IMR-90 (cell line): ENCODE measurements at regions of chr2 and their contacts with region 1.

Region 1: GRCh38 chr2:54455563-54456361 is at the start of gene SPTBN1:
- DNase-seq: peak; percentile 90
- ATAC-seq: peak; percentile 85
- H3K4me3 ChIP-seq: peak within 1 kb of the TSS; percentile 88
- H3K27ac ChIP-seq: peak within 1 kb of the TSS; percentile 72
- H3K4me1 ChIP-seq: peaks cover 7% of the 10 kb centered on the region; the same call in 1 of the 2 replicates
- H3K27me3 ChIP-seq: no peaks in the 10 kb centered on the region
- CTCF ChIP-seq: no peak
- POLR2A ChIP-seq: peak; percentile 61; the same call in 1 of the 2 replicates
- RAD21 ChIP-seq: 0 out of 2 replicates have a peak, but pooled peaks have one; percentile 5
- total RNA-seq, gene SPTBN1: 230 and 241 TPM in 2 replicates

Region 2: DNA sequence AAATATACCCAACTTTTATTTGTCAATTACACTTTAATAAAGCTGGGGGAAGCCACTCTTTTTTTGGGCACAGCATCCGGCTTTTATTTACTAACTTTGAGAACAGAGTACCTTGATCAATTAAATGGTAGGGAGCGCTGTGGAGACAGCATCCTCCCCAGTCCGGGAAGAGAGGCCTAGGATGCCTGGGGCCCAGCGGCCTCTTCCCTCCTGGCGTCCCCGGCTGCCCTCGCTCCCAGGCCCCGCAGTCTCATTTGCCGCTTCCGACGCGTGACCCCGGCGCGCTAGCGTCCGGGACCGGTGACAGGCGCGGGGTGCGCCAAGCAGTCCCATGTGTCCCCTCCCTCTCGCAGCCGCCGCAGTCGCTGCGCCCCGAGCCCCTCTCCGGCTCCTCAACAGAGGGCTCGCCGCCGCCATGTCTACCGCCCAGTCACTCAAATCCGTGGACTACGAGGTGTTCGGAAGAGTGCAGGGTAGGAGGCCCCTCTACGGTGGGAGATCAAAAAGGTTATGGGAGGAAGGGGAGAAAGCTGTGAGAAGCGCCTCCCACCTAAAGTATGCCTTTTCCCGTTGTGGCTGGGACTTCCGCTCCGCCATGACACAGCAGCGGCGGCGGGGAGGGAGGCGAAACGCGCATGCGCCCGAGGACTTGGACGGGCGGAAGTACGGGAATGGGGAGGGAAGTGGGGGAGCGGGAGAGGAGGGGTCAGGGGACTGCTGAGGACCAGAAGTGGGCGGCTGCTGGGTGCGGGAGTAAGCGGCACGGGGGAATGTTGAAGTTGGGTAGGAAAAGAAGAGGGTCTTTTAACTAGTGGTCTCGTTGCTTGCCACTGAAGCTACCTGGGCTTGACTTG is 340.3 kb before region 1 on chr2 and contains the start of gene ACYP2:
- CTCF ChIA-PET with region 1: no interaction called
- POLR2A ChIA-PET with region 1: no interaction called
- dilution Hi-C with region 1: no loop called
- in situ Hi-C with region 1: no loop called
- intact Hi-C with region 1: loop called (anchors 2 kb)
- DNase-seq: peak; percentile 96
- ATAC-seq: peak; percentile 97
- H3K4me3 ChIP-seq: peak within 1 kb of the TSS; percentile 77
- H3K27ac ChIP-seq: peak within 1 kb of the TSS; percentile 99
- H3K4me1 ChIP-seq: no peaks in the 10 kb centered on the region
- H3K27me3 ChIP-seq: no peaks in the 10 kb centered on the region
- CTCF ChIP-seq: peak; percentile 47
- POLR2A ChIP-seq: peak; percentile 93
- RAD21 ChIP-seq: peak; percentile 51
- total RNA-seq, gene ACYP2: 3.9 and 5.8 TPM in 2 replicates

Region 3: DNA sequence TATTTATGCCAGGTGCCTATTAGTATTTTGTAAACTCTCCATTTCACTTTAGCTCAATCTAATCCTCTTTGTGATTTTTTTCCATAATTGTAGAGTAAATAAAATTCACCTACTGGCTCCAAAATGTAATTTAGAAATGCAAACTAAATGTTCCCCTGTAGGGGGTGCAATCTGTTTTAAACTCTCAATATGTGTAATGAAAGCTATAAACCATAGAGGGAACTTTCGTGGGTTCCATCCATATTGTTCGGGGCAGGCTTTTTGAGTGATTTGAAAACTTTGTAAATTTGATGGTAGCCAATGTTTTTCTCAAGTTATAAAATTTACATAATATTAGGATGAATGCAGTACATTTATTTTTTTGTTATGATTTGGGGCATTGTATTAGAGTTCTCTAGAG is 249.2 kb before region 1 on chr2:
- CTCF ChIA-PET with region 1: no interaction called
- POLR2A ChIA-PET with region 1: no interaction called
- dilution Hi-C with region 1: no loop called
- in situ Hi-C with region 1: no loop called
- intact Hi-C with region 1: loop called (anchors 5 kb)
- DNase-seq: peak; percentile 46
- ATAC-seq: peak; percentile 42; the same call in 1 of the 2 replicates
- H3K4me3 ChIP-seq: no peak overlapping the region
- H3K27ac ChIP-seq: no peak overlapping the region
- H3K4me1 ChIP-seq: peaks cover 6% of the 10 kb centered on the region; the same call in 1 of the 2 replicates
- H3K27me3 ChIP-seq: no peaks in the 10 kb centered on the region
- CTCF ChIP-seq: peak; percentile 60
- POLR2A ChIP-seq: no peak
- RAD21 ChIP-seq: peak; percentile 56

Region 4: GRCh38 chr2:54336136-54336976 is 119.4 kb before region 1 on chr2:
- CTCF ChIA-PET with region 1: no interaction called
- POLR2A ChIA-PET with region 1: interaction called, 15 read pairs
- dilution Hi-C with region 1: no loop called
- in situ Hi-C with region 1: no loop called
- intact Hi-C with region 1: loop called (anchors 5 kb)
- DNase-seq: peak; percentile 92
- ATAC-seq: peak; percentile 87
- H3K4me3 ChIP-seq: no peak overlapping the region
- H3K27ac ChIP-seq: peak overlapping the region; percentile 60; the same call in 1 of the 2 replicates
- H3K4me1 ChIP-seq: peaks cover 8% of the 10 kb centered on the region
- H3K27me3 ChIP-seq: no peaks in the 10 kb centered on the region
- CTCF ChIP-seq: no peak
- POLR2A ChIP-seq: no peak
- RAD21 ChIP-seq: no peak

Region 5: DNA sequence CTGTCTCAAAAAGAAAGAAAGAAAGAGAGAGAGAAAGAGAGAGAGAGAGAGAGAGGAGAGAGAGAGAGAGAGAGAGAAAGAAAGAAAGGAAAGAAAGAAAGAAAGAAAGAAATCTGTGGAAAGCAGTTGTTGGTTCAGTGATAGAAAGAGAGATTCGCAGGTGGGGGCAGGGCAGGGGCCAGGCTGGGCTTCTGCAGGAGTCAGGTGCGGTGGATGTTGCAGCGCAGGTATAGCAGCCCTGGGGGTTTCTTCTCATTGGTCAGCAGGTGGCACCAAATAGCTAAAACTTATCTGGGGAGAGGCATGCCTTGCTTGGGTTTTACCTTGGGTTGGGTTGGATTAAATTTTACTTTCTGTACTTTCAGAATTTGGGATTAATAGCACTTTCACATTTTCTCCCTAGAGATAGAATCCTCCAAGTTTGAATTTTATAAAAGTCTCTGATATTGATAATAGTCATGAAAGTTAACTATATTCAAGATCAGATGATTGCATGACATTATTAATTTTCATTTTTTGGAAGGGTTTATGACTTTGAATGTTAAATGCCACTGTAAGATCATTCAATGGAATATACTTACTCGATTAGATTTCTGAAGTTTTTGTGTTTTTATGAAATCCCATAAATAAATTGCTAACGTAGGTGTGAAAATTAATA is 67.0 kb after region 1 on chr2:
- CTCF ChIA-PET with region 1: no interaction called
- POLR2A ChIA-PET with region 1: no interaction called
- dilution Hi-C with region 1: no loop called
- in situ Hi-C with region 1: no loop called
- intact Hi-C with region 1: loop called (anchors 5 kb)
- DNase-seq: peak; percentile 59
- ATAC-seq: no peak
- H3K4me3 ChIP-seq: no peak overlapping the region
- H3K27ac ChIP-seq: no peak overlapping the region
- H3K4me1 ChIP-seq: peaks cover 12% of the 10 kb centered on the region
- H3K27me3 ChIP-seq: no peaks in the 10 kb centered on the region
- CTCF ChIP-seq: peak; percentile 61
- POLR2A ChIP-seq: no peak
- RAD21 ChIP-seq: peak; percentile 75

Region 6: DNA sequence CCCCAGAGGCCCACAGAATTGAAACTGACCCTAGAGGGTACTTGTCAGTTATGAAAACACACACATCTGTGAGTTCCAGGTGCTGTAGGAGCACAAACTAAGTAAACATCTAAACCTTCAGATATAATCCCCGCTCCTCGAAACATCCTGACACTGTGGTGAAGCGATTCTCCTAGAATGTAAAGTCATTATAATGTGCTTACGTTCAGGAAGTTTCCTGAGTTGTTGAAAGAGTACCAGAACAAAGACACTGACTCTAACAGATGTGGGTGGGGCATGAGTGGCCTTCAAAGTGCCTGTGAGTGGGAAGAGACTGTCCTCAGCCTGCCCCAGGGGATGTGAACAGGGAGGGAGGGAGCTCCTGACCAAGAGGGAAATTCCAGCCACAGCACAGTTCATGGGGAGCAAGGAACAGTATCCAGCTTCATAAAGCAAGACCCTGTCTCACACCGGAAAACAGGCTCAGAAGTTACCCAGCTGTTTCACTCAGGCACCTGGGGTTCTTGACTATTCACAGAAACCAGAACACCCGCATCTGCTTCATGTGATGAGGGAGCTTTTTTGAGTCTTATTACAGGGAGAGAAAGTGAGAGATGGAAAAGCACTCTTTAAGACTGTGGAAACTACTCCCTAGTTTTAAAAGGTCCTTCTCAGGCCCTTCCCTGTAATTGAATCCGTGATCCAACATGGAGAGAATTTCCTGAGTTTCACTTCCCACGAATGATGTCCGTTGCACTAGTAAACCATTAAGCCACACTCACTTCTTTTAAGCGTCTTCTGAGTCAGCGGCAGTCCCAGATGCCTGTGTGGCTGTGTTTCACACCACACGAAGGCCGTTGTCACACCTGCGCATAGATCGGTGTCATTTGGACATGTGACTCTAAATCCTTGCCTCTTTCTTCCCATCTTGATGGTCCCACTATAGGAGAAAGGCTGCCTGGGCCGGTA is 179.1 kb after region 1 on chr2:
- CTCF ChIA-PET with region 1: no interaction called
- POLR2A ChIA-PET with region 1: no interaction called
- dilution Hi-C with region 1: no loop called
- in situ Hi-C with region 1: no loop called
- intact Hi-C with region 1: loop called (anchors 5 kb)
- DNase-seq: peak; percentile 84
- ATAC-seq: peak; percentile 54
- H3K4me3 ChIP-seq: peak overlapping the region; percentile 0; the same call in 1 of the 2 replicates
- H3K27ac ChIP-seq: peak overlapping the region; percentile 41
- H3K4me1 ChIP-seq: peaks cover 21% of the 10 kb centered on the region
- H3K27me3 ChIP-seq: no peaks in the 10 kb centered on the region
- CTCF ChIP-seq: no peak
- POLR2A ChIP-seq: no peak; the same call in 1 of the 2 replicates
- RAD21 ChIP-seq: 0 out of 2 replicates have a peak, but pooled peaks have one; percentile 4